CD4-positive, alpha-beta memory T cell (primary cell): ENCODE measurements at regions of chr11 and their contacts with region 1.

Region 1: DNA sequence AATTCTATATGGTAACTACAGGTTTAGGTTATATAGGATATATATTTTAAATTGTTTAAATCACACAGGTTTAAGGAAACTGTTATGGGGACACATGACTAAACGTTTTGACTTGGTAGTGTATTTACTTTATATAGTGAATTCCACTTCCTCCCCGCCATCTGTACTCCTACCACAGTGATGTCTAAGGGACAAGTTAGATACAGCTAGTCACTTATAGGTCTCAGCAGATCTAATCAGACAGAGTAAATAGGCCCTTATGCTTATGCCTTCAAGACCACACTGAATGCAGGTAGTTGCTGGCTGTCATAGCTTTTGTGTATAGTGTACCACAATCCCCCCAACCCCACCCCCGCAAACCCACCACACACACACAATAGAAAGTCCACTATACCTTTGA is 8.2 kb downstream of the SESN3 start:
- DNase-seq: no peak
- H3K4me3 ChIP-seq: no peak overlapping the region
- H3K4me3 Mint-ChIP-seq: no peak overlapping the region
- H3K27ac ChIP-seq: no peak overlapping the region
- H3K27ac Mint-ChIP-seq: no peak overlapping the region
- H3K4me1 ChIP-seq: peaks cover 52% of the 10 kb centered on the region
- H3K4me1 Mint-ChIP-seq: peaks cover 29 to 56% (median 41%) of the 10 kb centered on the region in 4 donors
- H3K27me3 ChIP-seq: no peaks in the 10 kb centered on the region
- H3K27me3 Mint-ChIP-seq: no peaks in the 10 kb centered on the region

Region 2: GRCh38 chr11:95175818-95176368 is 46.9 kb before region 1 on chr11:
- CTCF ChIA-PET with region 1: no interaction called
- POLR2A ChIA-PET with region 1: no interaction called
- intact Hi-C with region 1: no loop called
- DNase-seq: no peak
- H3K4me3 ChIP-seq: no peak overlapping the region
- H3K4me3 Mint-ChIP-seq: no peak overlapping the region
- H3K27ac ChIP-seq: no peak overlapping the region
- H3K27ac Mint-ChIP-seq: peak overlapping the region in 2 of 7 donors; percentile 3 to 31
- H3K4me1 ChIP-seq: no peaks in the 10 kb centered on the region
- H3K4me1 Mint-ChIP-seq: peaks cover 0 to 2% (median 0%) of the 10 kb centered on the region in 4 donors
- H3K27me3 ChIP-seq: no peaks in the 10 kb centered on the region
- H3K27me3 Mint-ChIP-seq: no peaks in the 10 kb centered on the region

Region 3: DNA sequence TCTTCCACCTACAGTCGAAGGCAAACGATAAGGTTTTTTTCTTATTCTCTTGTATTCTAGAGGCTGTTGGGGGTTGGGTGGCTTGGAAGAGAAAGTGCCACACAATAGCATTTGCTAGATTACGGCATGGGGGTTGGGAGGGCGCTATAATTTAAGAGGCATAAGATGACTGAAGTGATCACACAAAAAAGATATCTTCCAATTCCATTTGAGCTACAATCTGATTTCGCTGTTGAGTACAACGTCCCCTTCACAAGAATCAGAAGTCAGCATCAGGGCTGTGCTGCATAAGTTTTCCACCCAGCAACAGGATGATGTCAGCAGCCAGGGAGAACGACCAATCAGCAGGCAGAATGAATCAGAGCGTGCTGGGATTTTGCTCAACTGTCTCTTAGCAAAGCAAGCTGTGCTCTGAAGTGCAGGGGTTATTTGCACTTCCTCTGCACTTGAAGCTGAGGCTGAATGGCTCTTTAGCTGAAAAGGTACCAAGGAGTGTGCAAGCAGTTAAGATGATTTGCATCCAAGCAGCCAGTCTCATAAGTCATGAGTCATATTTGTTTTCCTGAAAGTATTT is 31.4 kb after region 1 on chr11:
- CTCF ChIA-PET with region 1: no interaction called
- POLR2A ChIA-PET with region 1: no interaction called
- intact Hi-C with region 1: loop called (anchors 5 kb)
- DNase-seq: peak; percentile 79 to 88 (median 81)
- H3K4me3 ChIP-seq: peak overlapping the region; percentile 26 to 36
- H3K4me3 Mint-ChIP-seq: peak overlapping the region; percentile 88 to 96 (median 92)
- H3K27ac ChIP-seq: peak overlapping the region; percentile 49
- H3K27ac Mint-ChIP-seq: peak overlapping the region; percentile 91 to 99 (median 95)
- H3K4me1 ChIP-seq: peaks cover 38% of the 10 kb centered on the region
- H3K4me1 Mint-ChIP-seq: peaks cover 23 to 42% (median 36%) of the 10 kb centered on the region in 4 donors
- H3K27me3 ChIP-seq: no peaks in the 10 kb centered on the region
- H3K27me3 Mint-ChIP-seq: peaks cover 0 to 2% of the 10 kb centered on the region in 2 donors

Region 4: GRCh38 chr11:95465887-95466286 is 243.1 kb after region 1 on chr11:
- CTCF ChIA-PET with region 1: no interaction called
- POLR2A ChIA-PET with region 1: no interaction called
- intact Hi-C with region 1: no loop called
- DNase-seq: no peak
- H3K4me3 ChIP-seq: no peak overlapping the region
- H3K4me3 Mint-ChIP-seq: no peak overlapping the region
- H3K27ac ChIP-seq: no peak overlapping the region
- H3K27ac Mint-ChIP-seq: no peak overlapping the region
- H3K4me1 ChIP-seq: no peaks in the 10 kb centered on the region
- H3K4me1 Mint-ChIP-seq: peaks cover 0 to 4% (median 0%) of the 10 kb centered on the region in 4 donors
- H3K27me3 ChIP-seq: no peaks in the 10 kb centered on the region
- H3K27me3 Mint-ChIP-seq: peaks cover 0 to 2% of the 10 kb centered on the region in 2 donors